ENCODE measurements at regions of chr4 and their contacts with region 1.

Region 1: GRCh38 chr4:167021545-167022155 is 212.6 kb downstream of the SPOCK3 start:
- DNase-seq: peak; percentile 52
- H3K4me3 ChIP-seq: no peak overlapping the region
- H3K27ac ChIP-seq: no peak overlapping the region
- H3K4me1 ChIP-seq: no peaks in the 10 kb centered on the region
- H3K27me3 ChIP-seq: no peaks in the 10 kb centered on the region
- CTCF ChIP-seq: peak; percentile 62 to 82

Region 2: DNA sequence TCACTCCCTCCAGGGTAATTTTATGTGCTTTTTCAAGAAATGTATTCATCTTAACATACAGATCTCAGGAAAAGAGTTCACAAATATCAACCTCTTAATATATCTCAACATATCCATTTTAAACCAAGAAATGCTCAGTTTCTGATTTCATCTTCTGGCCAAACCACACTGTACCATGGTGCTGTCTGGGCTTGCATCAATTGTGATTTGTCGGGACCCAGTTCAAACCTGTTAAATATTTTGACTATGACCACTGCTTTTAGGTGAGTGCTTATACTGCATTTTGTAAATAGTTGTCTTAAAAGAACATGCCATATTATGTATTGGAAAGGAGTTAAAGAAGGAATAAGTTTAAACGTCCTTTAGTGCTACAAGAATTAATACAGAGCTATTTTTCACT is 139.4 kb before region 1 on chr4:
- CTCF ChIA-PET with region 1: no interaction called
- dilution Hi-C with region 1: no loop called
- in situ Hi-C with region 1: no loop called
- intact Hi-C with region 1: no loop called
- DNase-seq: peak; percentile 76
- H3K4me3 ChIP-seq: peak overlapping the region in 1 of 3 experiments; percentile 27
- H3K27ac ChIP-seq: no peak overlapping the region
- H3K4me1 ChIP-seq: peaks cover 19% of the 10 kb centered on the region
- H3K27me3 ChIP-seq: no peaks in the 10 kb centered on the region
- CTCF ChIP-seq: no peak

Region 3: GRCh38 chr4:167150587-167150986 is 128.9 kb after region 1 on chr4:
- CTCF ChIA-PET with region 1: no interaction called
- dilution Hi-C with region 1: no loop called
- in situ Hi-C with region 1: no loop called
- intact Hi-C with region 1: loop called (anchors 1 kb)
- DNase-seq: no peak
- H3K4me3 ChIP-seq: no peak overlapping the region
- H3K27ac ChIP-seq: no peak overlapping the region
- H3K4me1 ChIP-seq: no peaks in the 10 kb centered on the region
- H3K27me3 ChIP-seq: no peaks in the 10 kb centered on the region
- CTCF ChIP-seq: no peak

Region 4: GRCh38 chr4:167234316-167234881 is 212.7 kb after region 1 on chr4 and contains the start of gene SPOCK3:
- CTCF ChIA-PET with region 1: no interaction called
- dilution Hi-C with region 1: no loop called
- in situ Hi-C with region 1: no loop called
- intact Hi-C with region 1: loop called (anchors 1 kb)
- DNase-seq: peak; percentile 47
- H3K4me3 ChIP-seq: peak within 1 kb of the TSS; percentile 39 to 47 (median 41)
- H3K27ac ChIP-seq: no peak within 1 kb of the TSS
- H3K4me1 ChIP-seq: peaks cover 13% of the 10 kb centered on the region
- H3K27me3 ChIP-seq: peaks cover 22% of the 10 kb centered on the region
- CTCF ChIP-seq: no peak
- total RNA-seq, gene SPOCK3: not detected

Region 5: GRCh38 chr4:167290678-167291077 is 269.0 kb after region 1 on chr4:
- CTCF ChIA-PET with region 1: no interaction called
- dilution Hi-C with region 1: loop called (anchors 25 kb)
- in situ Hi-C with region 1: loop called (anchors 5 to 25 kb)
- intact Hi-C with region 1: loop called (anchors 1 kb)
- DNase-seq: peak; percentile 1
- H3K4me3 ChIP-seq: no peak overlapping the region
- H3K27ac ChIP-seq: no peak overlapping the region
- H3K4me1 ChIP-seq: no peaks in the 10 kb centered on the region
- H3K27me3 ChIP-seq: no peaks in the 10 kb centered on the region
- CTCF ChIP-seq: peak; percentile 27 to 50